ENCODE measurements at regions of chr1 and their contacts with region 1.

Region 1: DNA sequence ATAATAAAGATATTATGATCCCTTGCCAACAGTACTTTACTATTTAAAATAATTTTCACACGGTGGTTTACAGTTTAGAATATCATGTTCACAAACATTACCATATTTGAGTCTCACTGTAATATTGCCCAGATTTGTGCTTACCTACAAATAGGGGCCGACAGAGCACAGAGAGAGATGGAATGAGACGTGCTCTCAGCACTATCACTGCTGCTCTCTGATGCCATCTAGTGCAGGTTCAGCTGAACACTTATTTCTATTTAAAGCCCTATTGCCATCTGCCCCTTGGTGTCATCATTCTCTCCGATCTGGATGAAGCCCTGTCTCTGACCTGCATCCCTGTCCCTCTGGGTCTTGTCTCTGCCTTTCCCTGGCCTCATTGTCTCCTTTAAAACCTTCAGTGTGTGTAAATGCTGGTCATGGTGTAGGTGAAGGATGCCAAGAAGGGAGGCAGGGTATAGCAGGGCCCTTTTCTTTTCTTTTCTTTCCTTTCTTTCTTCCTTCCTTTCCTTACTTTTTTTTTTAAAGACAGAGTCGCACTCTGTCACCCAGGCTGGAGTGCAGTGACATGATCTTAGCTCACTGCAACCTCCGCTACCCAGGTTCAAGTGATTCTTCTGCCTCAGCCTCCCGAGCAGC is 6.9 kb upstream of the GPATCH4 start:
- DNase-seq: peak; percentile 67
- H3K4me3 Mint-ChIP-seq: no peak overlapping the region
- H3K27ac Mint-ChIP-seq: no peak overlapping the region
- H3K4me1 Mint-ChIP-seq: peaks cover 5% of the 10 kb centered on the region
- H3K27me3 Mint-ChIP-seq: peaks cover 14% of the 10 kb centered on the region

Region 2: GRCh38 chr1:156456622-156457465 is 151.3 kb before region 1 on chr1:
- CTCF ChIA-PET with region 1: interaction called, 16 read pairs
- POLR2A ChIA-PET with region 1: no interaction called
- DNase-seq: peak; percentile 94
- H3K4me3 Mint-ChIP-seq: peak overlapping the region; percentile 83
- H3K27ac Mint-ChIP-seq: peak overlapping the region; percentile 97
- H3K4me1 Mint-ChIP-seq: peaks cover 30% of the 10 kb centered on the region
- H3K27me3 Mint-ChIP-seq: peaks cover 6% of the 10 kb centered on the region

Region 3: DNA sequence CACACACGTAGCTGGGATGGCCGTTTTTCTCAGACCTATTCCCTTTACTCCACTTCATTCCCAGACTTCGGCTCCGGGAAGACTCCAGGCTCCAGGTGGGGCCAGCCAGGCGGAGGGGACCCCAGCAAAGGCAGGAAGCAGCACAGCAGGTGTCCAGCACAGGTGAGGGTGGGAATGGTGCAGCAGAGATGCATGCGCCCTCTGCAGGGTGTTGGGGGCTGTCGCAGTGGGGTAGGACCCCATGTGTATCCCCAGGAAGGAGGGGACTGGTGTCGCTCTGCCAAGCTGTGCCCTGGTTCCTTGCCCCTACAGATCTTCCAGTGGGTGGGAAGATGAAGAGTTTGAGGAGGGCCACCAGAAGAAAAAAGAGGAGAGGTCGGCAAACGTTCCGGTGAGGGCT is 23.3 kb before region 1 on chr1:
- CTCF ChIA-PET with region 1: interaction called, 16 read pairs
- POLR2A ChIA-PET with region 1: no interaction called
- DNase-seq: no peak
- H3K4me3 Mint-ChIP-seq: no peak overlapping the region
- H3K27ac Mint-ChIP-seq: no peak overlapping the region
- H3K4me1 Mint-ChIP-seq: peaks cover 9% of the 10 kb centered on the region
- H3K27me3 Mint-ChIP-seq: peaks cover 2% of the 10 kb centered on the region

Region 4: GRCh38 chr1:156591432-156592157 is 16.6 kb before region 1 on chr1 and contains the start of gene NAXE:
- CTCF ChIA-PET with region 1: interaction called, 16 read pairs
- POLR2A ChIA-PET with region 1: interaction called, 6 read pairs
- DNase-seq: peak; percentile 73
- H3K4me3 Mint-ChIP-seq: peak within 1 kb of the TSS; percentile 79
- H3K27ac Mint-ChIP-seq: peak within 1 kb of the TSS; percentile 76
- H3K4me1 Mint-ChIP-seq: peaks cover 35% of the 10 kb centered on the region
- H3K27me3 Mint-ChIP-seq: no peaks in the 10 kb centered on the region
- total RNA-seq, gene NAXE: 45.3 to 46.1 TPM

Measured in activated CD4-positive, alpha-beta memory T cell treated with anti-CD3 and anti-CD28 coated beads, Interleukin-2, amount 10 ng/mL, durations not matched to agents 7 days and 5 days (primary cell).